ENCODE measurements at regions of chr14 and their contacts with region 1.

Region 1: DNA sequence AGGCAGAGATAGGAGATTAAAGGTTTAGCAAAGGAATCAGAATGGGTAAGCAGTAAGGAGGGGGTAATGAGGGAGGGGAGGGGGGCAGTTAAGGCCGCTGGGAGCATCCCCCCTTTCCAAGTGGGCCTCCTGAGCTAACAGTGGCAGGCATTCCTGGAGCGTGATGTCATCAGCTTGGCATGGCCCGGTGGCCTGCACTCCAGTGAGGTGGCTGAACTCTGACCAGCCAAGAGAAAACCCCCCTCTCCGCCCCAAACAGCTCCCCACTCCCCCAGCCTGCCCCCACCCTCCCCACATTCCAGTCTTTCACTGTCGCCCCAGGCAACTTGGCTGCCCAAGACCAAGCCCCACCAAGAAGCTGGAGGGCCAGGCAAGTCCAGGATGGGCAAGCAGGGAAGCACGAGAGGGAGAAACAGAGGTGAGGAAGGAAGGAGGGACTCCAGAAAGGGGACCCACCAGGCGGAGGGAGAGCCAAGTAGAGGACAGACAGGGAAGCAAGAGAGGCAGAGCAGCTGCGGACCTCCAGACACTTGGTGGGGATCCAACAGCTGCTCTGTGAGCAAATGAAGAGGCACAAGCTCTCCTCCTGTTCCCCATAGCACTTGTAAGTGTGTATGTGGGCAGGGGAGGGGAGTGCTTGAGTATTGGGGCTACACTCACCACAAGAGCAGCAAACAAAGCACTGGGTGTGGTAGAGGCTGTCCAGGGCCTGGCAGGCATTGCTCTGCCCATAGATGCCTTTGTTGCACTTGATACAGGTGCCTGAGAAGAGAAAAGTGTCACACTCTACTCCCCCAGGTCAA is 4.5 kb downstream of the AJUBA start:
- DNase-seq: peak; percentile 81

Region 2: DNA sequence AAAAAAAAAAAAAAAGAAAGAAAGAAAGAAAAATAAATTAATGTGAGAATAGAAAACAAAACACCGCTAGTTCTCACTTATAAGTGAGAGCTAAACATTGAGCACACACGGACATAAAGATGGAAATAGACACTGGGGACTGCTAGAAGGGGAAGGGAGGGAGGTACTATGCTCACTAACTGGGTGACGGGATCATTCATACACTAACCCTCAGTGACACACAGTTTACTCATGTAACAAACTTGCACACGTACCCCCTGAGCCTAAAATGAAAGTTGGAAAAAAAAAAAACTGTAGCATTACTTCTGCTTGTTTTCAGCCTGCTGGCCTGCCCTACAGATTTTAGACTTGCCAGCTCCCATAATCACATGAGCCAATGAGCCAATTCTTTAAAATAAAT is 38.2 kb before region 1 on chr14:
- intact Hi-C with region 1: loop called in 1 of 2 experiments (anchors 5 kb)
- DNase-seq: no peak

Region 3: GRCh38 chr14:22952418-22952817 is 25.5 kb before region 1 on chr14:
- intact Hi-C with region 1: loop called in 1 of 2 experiments (anchors 1 kb)
- DNase-seq: no peak

Region 4: GRCh38 chr14:23085458-23085857 is 107.6 kb after region 1 on chr14:
- intact Hi-C with region 1: no loop called
- DNase-seq: no peak

Region 5: GRCh38 chr14:23406244-23406643 is 428.4 kb after region 1 on chr14:
- intact Hi-C with region 1: no loop called
- DNase-seq: no peak

Measured in posterior vena cava (tissue), 2 donors.